Calu3 (cell line): ENCODE measurements at regions of chrX and their contacts with region 1.

Region 1: DNA sequence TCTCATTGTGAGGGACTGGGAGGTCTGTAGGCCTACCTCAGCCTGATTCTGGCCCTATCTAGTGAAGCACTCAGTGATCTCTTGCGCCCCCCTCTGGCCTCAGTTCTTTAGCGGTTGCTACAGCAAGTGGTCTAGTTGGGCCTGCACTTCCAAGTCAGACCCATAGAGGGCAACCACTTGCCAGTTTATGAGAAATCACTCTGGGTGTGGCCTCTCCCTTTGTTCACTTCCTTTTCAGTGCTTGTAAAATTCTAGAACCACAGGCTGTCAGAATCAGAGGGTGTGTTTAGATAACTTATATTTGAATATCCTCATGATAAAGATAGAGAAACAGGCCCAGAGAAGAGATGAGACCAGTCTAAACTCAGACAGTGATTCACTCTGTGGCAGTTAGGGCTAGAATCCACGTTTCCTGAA is 60.9 kb upstream of the LAS1L start:
- DNase-seq: peak; percentile 90
- H3K4me3 Mint-ChIP-seq: no peak overlapping the region
- H3K27ac Mint-ChIP-seq: no peak overlapping the region
- H3K4me1 Mint-ChIP-seq: no peaks in the 10 kb centered on the region
- H3K27me3 Mint-ChIP-seq: peaks cover 14% of the 10 kb centered on the region
- CTCF ChIP-seq: peak; percentile 91

Region 2: DNA sequence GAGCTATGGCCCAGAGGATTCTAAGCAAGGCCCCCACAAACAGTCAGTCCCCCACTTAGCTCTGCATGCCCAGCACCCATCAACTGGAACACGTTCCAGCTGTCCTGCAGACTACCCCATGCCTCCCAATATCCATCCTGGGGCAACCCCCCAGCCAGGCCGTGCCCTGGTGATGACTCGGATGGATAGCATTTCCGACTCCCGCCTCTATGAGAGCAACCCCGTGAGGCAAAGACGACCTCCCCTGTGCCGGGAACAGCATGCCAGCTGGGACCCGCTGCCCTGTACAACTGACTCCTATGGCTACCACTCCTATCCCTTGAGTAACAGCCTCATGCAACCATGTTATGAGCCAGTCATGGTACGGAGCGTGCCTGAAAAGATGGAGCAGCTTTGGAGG is 92.8 kb before region 1 on chrX:
- CTCF ChIA-PET with region 1: no interaction called
- intact Hi-C with region 1: no loop called
- DNase-seq: no peak
- H3K4me3 Mint-ChIP-seq: no peak overlapping the region
- H3K27ac Mint-ChIP-seq: no peak overlapping the region
- H3K4me1 Mint-ChIP-seq: no peaks in the 10 kb centered on the region
- H3K27me3 Mint-ChIP-seq: no peaks in the 10 kb centered on the region
- CTCF ChIP-seq: no peak

Region 3: GRCh38 chrX:65637335-65637734 is 41.9 kb after region 1 on chrX:
- CTCF ChIA-PET with region 1: no interaction called
- intact Hi-C with region 1: no loop called
- DNase-seq: no peak
- H3K4me3 Mint-ChIP-seq: no peak overlapping the region
- H3K27ac Mint-ChIP-seq: no peak overlapping the region
- H3K4me1 Mint-ChIP-seq: no peaks in the 10 kb centered on the region
- H3K27me3 Mint-ChIP-seq: no peaks in the 10 kb centered on the region
- CTCF ChIP-seq: no peak

Region 4: DNA sequence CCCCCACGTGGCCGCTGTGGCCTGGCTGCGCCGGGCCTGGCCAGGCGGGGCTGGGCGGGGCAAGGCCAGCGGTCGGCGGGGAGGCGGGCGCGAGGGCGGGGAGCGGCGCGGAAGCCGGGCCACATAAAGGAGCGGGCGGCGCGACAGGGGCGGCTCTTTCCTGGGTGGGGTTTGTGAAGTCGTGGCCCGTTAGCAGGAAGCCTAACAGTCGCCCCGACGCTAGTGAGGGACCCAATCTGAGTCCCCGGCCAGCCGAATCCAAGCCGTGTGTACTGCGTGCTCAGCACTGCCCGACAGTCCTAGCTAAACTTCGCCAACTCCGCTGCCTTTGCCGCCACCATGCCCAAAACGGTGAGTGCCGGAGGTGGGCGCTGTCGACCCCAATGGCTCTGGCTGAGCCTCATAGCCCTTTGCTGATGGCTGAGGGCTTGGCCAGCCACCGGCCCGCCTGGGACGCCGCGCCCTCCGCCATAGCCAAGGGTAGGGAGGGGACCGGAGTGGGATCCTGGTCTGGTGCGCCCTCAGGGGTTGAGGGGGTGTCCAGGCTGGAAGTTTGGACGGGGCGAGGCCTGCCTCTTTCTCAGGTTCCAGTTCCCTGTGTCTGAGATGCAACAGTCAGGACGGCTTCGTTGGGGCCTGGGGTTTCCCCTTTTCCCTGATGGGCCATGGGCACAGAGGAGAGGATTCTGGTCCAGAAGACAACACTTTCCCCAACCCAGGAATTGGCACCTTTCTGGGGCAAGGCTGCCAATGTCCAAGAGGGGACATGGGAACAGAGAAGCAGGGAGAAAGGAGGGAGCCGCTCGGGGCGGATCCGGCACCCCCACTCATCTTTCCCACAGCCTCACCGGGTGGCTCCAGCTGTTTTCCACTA is 72.3 kb after region 1 on chrX and contains the start of gene MSN:
- CTCF ChIA-PET with region 1: no interaction called
- intact Hi-C with region 1: loop called (anchors 5 kb)
- DNase-seq: peak; percentile 78
- H3K4me3 Mint-ChIP-seq: peak within 1 kb of the TSS; percentile 81
- H3K27ac Mint-ChIP-seq: peak within 1 kb of the TSS; percentile 91
- H3K4me1 Mint-ChIP-seq: peaks cover 23% of the 10 kb centered on the region
- H3K27me3 Mint-ChIP-seq: no peaks in the 10 kb centered on the region
- CTCF ChIP-seq: no peak
- total RNA-seq, gene MSN: 101 and 129 TPM in 2 replicates

Region 5: GRCh38 chrX:65706041-65706828 is 110.8 kb after region 1 on chrX:
- CTCF ChIA-PET with region 1: interaction called, 4 read pairs
- intact Hi-C with region 1: loop called (anchors 2 kb)
- DNase-seq: peak; percentile 20
- H3K4me3 Mint-ChIP-seq: peak overlapping the region; percentile 28
- H3K27ac Mint-ChIP-seq: peak overlapping the region; percentile 72
- H3K4me1 Mint-ChIP-seq: peaks cover 28% of the 10 kb centered on the region
- H3K27me3 Mint-ChIP-seq: no peaks in the 10 kb centered on the region
- CTCF ChIP-seq: no peak

Region 6: GRCh38 chrX:65745992-65746391 is 150.5 kb after region 1 on chrX:
- CTCF ChIA-PET with region 1: no interaction called
- intact Hi-C with region 1: loop called (anchors 5 kb)
- DNase-seq: no peak
- H3K4me3 Mint-ChIP-seq: no peak overlapping the region
- H3K27ac Mint-ChIP-seq: peak overlapping the region; percentile 25
- H3K4me1 Mint-ChIP-seq: peaks cover 24% of the 10 kb centered on the region
- H3K27me3 Mint-ChIP-seq: no peaks in the 10 kb centered on the region
- CTCF ChIP-seq: no peak

Region 7: DNA sequence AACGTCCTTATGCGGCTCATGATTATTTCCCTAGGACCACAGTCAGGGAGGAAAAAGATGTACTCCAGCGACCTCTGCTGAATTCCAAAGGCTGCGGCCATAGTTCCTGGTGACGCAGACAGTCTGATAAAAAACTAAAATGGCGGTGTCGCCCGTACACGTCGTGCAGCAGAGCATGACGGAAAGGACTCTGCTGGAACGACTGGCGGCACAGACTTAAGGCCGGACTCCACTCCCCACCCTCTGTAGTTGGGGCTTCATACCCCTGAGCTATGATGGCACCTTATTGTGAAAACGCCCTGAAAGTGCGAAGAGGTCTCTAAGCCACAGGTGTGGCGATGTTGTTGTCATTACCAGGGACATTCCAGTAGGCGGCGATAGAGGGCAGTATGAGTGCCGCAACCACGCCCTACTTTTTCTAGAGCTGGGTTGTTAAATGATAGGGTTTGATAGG is 1133.4 kb after region 1 on chrX:
- CTCF ChIA-PET with region 1: no interaction called
- intact Hi-C with region 1: loop called (anchors 5 kb)
- DNase-seq: peak; percentile 23
- H3K4me3 Mint-ChIP-seq: peak overlapping the region; percentile 21
- H3K27ac Mint-ChIP-seq: no peak overlapping the region
- H3K4me1 Mint-ChIP-seq: no peaks in the 10 kb centered on the region
- H3K27me3 Mint-ChIP-seq: no peaks in the 10 kb centered on the region
- CTCF ChIP-seq: peak; percentile 26